ENCODE measurements at regions of chr5 and their contacts with region 1.

Region 1: DNA sequence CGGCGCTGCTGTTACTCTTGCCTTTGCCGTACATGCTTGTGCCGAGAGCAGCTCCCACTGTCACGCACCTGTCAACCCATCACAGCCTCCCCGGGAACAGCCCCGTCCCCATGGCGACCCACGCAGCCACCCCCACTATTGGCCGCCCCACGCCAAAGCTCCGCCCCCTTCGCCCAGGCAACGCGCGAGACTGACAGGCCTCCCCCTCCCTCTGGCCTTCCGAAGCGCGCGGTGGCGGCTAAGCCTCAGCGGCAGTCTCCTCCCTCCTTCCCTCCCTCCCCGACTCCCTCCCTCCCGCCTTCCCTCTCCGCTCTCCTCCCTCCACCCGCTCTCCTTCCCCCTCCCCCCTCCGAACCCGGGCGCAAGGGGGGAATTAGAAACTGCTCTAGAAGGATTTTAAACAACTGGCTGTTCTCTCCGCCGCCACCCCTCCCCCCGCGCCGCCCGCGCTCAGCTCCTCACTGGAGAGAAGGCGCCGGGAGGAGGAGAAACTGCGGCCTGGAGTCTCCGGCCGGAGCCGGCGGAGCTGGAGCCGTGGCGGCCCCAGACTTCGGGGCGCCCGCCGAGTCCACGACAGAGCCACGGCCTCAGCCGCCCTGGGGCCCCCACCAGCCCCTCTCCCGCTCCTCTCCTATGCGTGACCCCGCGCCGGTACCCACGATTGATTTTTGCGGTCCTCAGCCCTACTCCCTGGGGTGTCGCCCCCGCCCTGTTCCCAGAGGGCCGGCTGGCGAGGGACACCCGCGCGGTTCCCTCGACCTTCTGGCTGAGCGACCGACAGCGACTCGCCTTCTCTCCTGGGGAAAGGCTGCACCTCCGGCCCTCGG is at the start of gene SSBP2:
- DNase-seq: peak; percentile 99
- ATAC-seq: peak; percentile 79
- H3K4me3 Mint-ChIP-seq: peak within 1 kb of the TSS; percentile 83
- H3K27ac Mint-ChIP-seq: 0 out of 2 replicates have a peak within 1 kb of the TSS, but pooled peaks have one; percentile 18
- H3K4me1 Mint-ChIP-seq: peaks cover 54% of the 10 kb centered on the region
- H3K27me3 Mint-ChIP-seq: peaks cover 21% of the 10 kb centered on the region
- CTCF ChIP-seq: no peak
- total RNA-seq, gene SSBP2: 24.9 to 29.7 TPM (median 27.8 TPM) in 3 replicates

Region 2: DNA sequence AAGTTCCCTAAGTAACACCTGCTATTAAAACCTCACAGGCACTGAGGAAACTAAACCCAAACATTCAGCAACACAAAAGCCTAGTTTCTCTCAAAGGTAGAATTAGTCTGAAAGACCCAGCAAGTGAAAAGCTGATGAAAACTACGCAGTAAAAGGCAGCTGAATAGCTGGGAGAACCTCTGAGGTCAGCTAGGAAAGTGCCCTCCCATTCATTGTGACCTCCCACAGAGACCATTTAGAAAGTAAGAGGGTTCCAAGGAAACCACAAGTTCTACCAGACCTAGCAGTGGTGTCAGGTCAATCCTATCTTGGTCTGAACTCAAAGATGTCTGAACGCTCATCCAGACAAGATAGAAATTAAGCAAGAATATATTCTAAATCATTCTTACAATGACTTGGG is 145.1 kb before region 1 on chr5:
- CTCF ChIA-PET with region 1: no interaction called
- POLR2A ChIA-PET with region 1: no interaction called
- DNase-seq: no peak
- ATAC-seq: peak; percentile 95
- H3K4me3 Mint-ChIP-seq: no peak overlapping the region
- H3K27ac Mint-ChIP-seq: peak overlapping the region; percentile 92
- H3K4me1 Mint-ChIP-seq: peaks cover 38% of the 10 kb centered on the region
- H3K27me3 Mint-ChIP-seq: no peaks in the 10 kb centered on the region
- CTCF ChIP-seq: no peak

Region 3: GRCh38 chr5:81787474-81788242 is 36.4 kb after region 1 on chr5:
- CTCF ChIA-PET with region 1: no interaction called
- POLR2A ChIA-PET with region 1: interaction called, 10 read pairs
- DNase-seq: no peak
- ATAC-seq: peak; percentile 76
- H3K4me3 Mint-ChIP-seq: no peak overlapping the region
- H3K27ac Mint-ChIP-seq: peak overlapping the region; percentile 96
- H3K4me1 Mint-ChIP-seq: peaks cover 28% of the 10 kb centered on the region
- H3K27me3 Mint-ChIP-seq: no peaks in the 10 kb centered on the region
- CTCF ChIP-seq: no peak

Region 4: GRCh38 chr5:81838307-81838906 is 87.2 kb after region 1 on chr5:
- CTCF ChIA-PET with region 1: interaction called, 14 read pairs
- POLR2A ChIA-PET with region 1: interaction called, 3 read pairs
- DNase-seq: no peak
- ATAC-seq: peak; percentile 90
- H3K4me3 Mint-ChIP-seq: no peak overlapping the region
- H3K27ac Mint-ChIP-seq: no peak overlapping the region
- H3K4me1 Mint-ChIP-seq: peaks cover 17% of the 10 kb centered on the region
- H3K27me3 Mint-ChIP-seq: no peaks in the 10 kb centered on the region
- CTCF ChIP-seq: peak; percentile 28; the same call in 1 of the 2 replicates

Region 5: DNA sequence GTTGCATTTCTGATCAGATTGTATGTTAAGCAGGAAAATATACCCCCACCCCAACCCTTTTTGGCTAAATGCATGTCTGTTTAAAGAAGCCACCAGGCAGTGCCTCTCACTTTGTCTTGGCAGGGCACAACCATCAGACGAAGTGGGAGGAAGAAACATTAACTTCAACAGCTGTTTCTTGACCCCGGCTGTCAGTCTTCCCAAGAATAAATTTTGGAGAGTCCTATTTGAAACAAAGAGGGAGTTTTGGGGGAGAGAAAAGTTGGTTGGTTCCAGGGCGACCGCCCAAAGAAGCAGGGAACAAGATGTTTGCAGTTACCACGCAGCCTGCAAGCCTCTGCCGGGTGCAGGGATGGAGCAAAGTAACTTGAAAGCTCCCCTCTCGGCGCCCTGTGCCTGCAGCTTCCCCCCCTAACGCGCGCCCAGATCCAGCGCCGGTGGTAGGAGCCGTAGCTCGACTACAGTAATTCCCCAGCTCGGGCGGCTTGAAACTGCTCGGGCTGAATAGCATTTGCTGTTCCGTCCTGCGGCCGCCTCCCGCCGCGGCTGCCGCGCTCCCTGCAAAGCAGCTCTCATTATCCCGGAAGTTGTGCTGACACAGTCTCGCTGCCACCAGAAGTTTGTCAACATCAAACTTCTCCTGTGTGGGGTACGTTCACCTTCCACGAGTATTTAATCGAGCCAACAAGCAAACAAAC is 100.4 kb after region 1 on chr5:
- CTCF ChIA-PET with region 1: interaction called, 104 read pairs
- POLR2A ChIA-PET with region 1: interaction called, 110 read pairs
- DNase-seq: peak; percentile 96
- ATAC-seq: peak; percentile 85
- H3K4me3 Mint-ChIP-seq: peak overlapping the region; percentile 77
- H3K27ac Mint-ChIP-seq: peak overlapping the region; percentile 100
- H3K4me1 Mint-ChIP-seq: peaks cover 79% of the 10 kb centered on the region
- H3K27me3 Mint-ChIP-seq: no peaks in the 10 kb centered on the region
- CTCF ChIP-seq: no peak

Region 6: DNA sequence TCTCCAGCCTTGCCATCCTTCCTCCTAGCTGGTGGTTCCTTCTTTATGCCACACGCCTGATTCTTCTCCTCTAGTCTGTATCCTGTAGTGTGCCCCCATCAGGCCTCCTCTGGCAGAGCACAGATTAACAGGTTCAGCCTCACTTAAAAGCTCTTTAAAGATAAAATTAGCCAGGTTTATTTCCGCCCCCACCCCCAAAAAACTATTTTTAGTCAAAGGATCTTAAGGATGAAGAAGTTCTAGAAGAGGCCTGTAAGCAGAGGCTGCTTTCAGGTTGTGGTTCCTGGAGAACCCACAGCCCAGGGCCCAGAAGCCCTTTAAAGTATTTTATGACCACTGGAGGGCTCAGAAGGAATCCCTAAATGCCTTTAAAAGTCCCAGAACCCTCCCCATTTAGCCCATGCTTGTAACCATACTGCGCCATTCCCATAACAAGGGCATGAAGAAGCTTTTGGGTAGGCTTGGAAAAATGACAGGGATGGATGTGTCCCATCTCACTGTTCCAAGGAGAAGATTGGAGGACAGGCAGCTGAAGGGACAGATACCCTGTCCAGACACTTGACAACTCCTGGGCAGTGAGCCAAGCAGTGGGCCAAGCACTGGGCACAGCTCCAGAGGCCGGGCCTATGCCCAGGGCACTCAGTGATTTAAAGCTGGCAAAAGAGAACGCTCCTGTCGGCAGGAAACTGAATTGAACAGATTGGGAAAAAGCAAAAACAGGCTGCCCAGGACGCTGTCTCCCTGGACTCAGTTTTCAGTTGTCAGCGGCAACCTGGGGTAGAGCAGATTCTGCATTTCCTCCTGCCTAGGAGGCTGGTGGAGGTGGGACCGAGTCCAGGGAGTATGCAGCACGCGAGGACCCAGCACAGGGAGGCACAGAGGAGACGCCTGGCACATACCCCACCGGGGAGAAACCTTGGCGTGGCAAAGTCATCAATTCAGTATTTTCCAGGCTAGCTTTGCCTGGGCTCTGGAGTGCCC is 106.0 kb after region 1 on chr5:
- CTCF ChIA-PET with region 1: interaction called, 104 read pairs
- POLR2A ChIA-PET with region 1: interaction called, 110 read pairs
- DNase-seq: peak; percentile 42
- ATAC-seq: peak; percentile 64
- H3K4me3 Mint-ChIP-seq: no peak overlapping the region
- H3K27ac Mint-ChIP-seq: peak overlapping the region; percentile 17; the same call in 1 of the 2 replicates
- H3K4me1 Mint-ChIP-seq: peaks cover 52% of the 10 kb centered on the region
- H3K27me3 Mint-ChIP-seq: no peaks in the 10 kb centered on the region; the same call in 1 of the 2 replicates
- CTCF ChIP-seq: peak; percentile 30